Aorta (tissue), 5 donors: ENCODE measurements at regions of chr18 and their contacts with region 1.

Region 1: DNA sequence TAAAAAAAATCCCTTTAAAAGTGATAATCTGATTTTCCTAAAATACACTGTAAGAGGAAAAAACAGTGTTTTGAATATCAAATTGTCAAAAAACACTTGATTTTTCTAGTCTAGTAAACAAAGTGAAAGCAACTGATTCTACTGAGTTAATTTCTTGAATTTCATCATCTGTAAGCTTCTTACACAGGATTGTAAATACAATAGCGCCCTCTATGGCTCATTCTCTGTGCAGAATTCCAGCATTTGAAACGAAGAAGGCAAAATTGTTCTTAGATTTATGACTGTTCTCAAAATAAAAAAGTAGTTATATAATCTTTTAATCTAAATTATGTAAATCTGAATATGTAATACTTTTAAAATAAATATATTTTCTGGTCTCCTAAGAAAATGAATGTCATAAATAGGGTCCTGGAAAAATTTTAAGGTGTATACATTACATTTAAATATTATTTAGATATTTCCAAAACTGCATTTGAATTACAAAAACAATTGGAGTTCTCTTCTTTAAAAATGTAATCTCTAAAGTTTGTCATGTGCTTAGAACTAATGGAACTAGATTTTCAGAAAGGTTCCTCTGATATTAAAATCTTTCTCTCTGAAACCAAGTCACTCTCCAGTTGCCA is 176.9 kb upstream of the MC4R start:
- DNase-seq: no peak
- ATAC-seq: no peak
- H3K4me3 ChIP-seq: no peak overlapping the region
- H3K27ac ChIP-seq: no peak overlapping the region
- H3K4me1 ChIP-seq: no peaks in the 10 kb centered on the region
- H3K27me3 ChIP-seq: no peaks in the 10 kb centered on the region

Region 2: DNA sequence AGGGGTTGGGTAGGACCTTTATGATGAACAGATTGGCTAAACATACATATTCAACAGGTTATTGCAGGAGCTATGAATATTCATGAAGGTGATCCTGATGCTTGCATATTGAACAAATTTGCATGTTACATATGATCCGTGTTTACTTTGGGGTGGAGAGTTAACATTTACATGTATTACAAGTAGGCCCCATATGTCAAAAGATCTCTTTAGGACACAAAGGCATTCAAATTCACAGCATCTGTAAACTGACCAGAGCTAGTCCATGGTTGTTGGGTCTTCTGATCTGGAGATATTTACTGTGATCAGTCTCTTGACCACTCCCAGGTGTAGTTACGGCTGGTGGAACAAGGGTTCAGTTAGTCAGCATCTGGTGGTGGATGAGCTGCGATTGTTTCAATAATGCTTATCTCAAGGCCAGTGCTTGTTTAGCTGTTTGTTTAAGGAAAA is 569.2 kb before region 1 on chr18:
- intact Hi-C with region 1: loop called (anchors 5 to 10 kb)
- DNase-seq: no peak
- ATAC-seq: no peak
- H3K4me3 ChIP-seq: no peak overlapping the region
- H3K27ac ChIP-seq: no peak overlapping the region
- H3K4me1 ChIP-seq: no peaks in the 10 kb centered on the region
- H3K27me3 ChIP-seq: no peaks in the 10 kb centered on the region

Region 3: GRCh38 chr18:59988098-59988706 is 561.2 kb before region 1 on chr18:
- intact Hi-C with region 1: loop called (anchors 5 to 10 kb)
- DNase-seq: no peak
- ATAC-seq: peak; percentile 68
- H3K4me3 ChIP-seq: no peak overlapping the region
- H3K27ac ChIP-seq: no peak overlapping the region
- H3K4me1 ChIP-seq: no peaks in the 10 kb centered on the region
- H3K27me3 ChIP-seq: no peaks in the 10 kb centered on the region